CD14-positive monocyte (primary cell): ENCODE measurements at regions of chr1 and their contacts with region 1.

Region 1: GRCh38 chr1:24910751-24911650 is 19.1 kb downstream of the RUNX3 start:
- DNase-seq: peak; percentile 37 to 62 (median 37)
- H3K4me3 ChIP-seq: no peak overlapping the region
- H3K4me3 Mint-ChIP-seq: no peak overlapping the region
- H3K27ac ChIP-seq: no peak overlapping the region
- H3K27ac Mint-ChIP-seq: peak overlapping the region in 6 of 7 donors; percentile 17 to 87 (median 72)
- H3K4me1 ChIP-seq: peaks cover 5 to 8% of the 10 kb centered on the region in 2 donors
- H3K4me1 Mint-ChIP-seq: peaks cover 22% of the 10 kb centered on the region
- H3K27me3 ChIP-seq: no peaks in the 10 kb centered on the region
- H3K27me3 Mint-ChIP-seq: peaks cover 0 to 3% (median 0%) of the 10 kb centered on the region in 3 donors
- CTCF ChIP-seq: no peak

Region 2: DNA sequence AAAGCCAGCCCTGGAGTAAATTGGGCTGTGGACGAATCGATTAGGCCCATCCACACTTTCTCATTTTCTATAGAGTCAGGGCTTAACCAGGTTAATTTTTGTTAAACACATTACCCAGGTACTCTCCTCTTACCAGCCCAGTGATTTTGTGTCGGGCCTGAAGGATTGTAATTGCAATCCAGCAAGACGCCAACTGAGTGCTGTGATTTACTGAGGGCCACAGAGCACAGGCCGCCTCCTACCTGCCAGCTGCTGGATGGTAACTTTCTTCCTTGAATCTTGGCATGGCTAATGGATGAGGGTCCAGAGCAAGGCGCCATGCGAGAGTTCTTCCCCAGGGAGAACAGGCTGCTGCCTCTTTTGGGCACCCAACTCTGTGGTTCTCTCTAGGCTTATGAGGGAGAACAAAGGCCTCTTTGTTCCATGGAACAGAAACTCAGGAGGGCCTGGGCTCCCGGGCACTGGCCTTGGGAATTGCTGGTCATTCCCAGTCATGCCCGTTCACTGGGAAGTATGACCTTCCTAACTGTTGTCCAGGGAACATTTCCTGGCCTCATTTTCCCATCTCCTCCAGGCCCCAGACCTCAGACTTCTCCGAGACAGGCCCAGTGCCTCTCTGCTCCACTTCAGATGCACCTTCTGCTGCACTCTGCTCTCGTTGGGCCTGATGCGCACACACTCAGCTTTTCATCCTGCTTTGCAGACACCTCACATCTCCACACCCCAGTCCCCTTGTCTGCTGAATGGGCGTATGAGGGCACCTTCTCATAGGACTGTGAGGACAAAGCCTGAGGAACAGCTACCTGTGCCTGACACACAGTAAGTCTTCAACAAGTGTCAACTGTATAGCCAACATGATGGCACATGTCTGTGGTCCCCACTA is 264.0 kb after region 1 on chr1:
- intact Hi-C with region 1: no loop called
- DNase-seq: no peak
- H3K4me3 ChIP-seq: no peak overlapping the region
- H3K4me3 Mint-ChIP-seq: no peak overlapping the region
- H3K27ac ChIP-seq: no peak overlapping the region
- H3K27ac Mint-ChIP-seq: no peak overlapping the region
- H3K4me1 ChIP-seq: no peaks in the 10 kb centered on the region
- H3K4me1 Mint-ChIP-seq: no peaks in the 10 kb centered on the region
- H3K27me3 ChIP-seq: no peaks in the 10 kb centered on the region
- H3K27me3 Mint-ChIP-seq: no peaks in the 10 kb centered on the region
- CTCF ChIP-seq: no peak

Region 3: GRCh38 chr1:25204797-25205480 is 293.9 kb after region 1 on chr1:
- intact Hi-C with region 1: loop called in 1 of 2 experiments (anchors 10 kb)
- DNase-seq: peak; percentile 33 to 64 (median 54)
- H3K4me3 ChIP-seq: no peak overlapping the region
- H3K4me3 Mint-ChIP-seq: no peak overlapping the region
- H3K27ac ChIP-seq: no peak overlapping the region
- H3K27ac Mint-ChIP-seq: no peak overlapping the region
- H3K4me1 ChIP-seq: no peaks in the 10 kb centered on the region
- H3K4me1 Mint-ChIP-seq: peaks cover 4% of the 10 kb centered on the region
- H3K27me3 ChIP-seq: no peaks in the 10 kb centered on the region
- H3K27me3 Mint-ChIP-seq: peaks cover 2 to 6% (median 6%) of the 10 kb centered on the region in 3 donors
- CTCF ChIP-seq: peak; percentile 84